Colonic mucosa (tissue), 4 donors: ENCODE measurements at regions of chr5 and their contacts with region 1.

Region 1: GRCh38 chr5:65925601-65926275 is 637 bp upstream of the ERBIN start:
- DNase-seq: peak; percentile 78
- H3K4me3 ChIP-seq: peak overlapping the region; percentile 74
- H3K27ac ChIP-seq: peak overlapping the region; percentile 100
- H3K4me1 ChIP-seq: peaks cover 3% of the 10 kb centered on the region
- H3K27me3 ChIP-seq: no peaks in the 10 kb centered on the region
- CTCF ChIP-seq: no peak

Region 2: DNA sequence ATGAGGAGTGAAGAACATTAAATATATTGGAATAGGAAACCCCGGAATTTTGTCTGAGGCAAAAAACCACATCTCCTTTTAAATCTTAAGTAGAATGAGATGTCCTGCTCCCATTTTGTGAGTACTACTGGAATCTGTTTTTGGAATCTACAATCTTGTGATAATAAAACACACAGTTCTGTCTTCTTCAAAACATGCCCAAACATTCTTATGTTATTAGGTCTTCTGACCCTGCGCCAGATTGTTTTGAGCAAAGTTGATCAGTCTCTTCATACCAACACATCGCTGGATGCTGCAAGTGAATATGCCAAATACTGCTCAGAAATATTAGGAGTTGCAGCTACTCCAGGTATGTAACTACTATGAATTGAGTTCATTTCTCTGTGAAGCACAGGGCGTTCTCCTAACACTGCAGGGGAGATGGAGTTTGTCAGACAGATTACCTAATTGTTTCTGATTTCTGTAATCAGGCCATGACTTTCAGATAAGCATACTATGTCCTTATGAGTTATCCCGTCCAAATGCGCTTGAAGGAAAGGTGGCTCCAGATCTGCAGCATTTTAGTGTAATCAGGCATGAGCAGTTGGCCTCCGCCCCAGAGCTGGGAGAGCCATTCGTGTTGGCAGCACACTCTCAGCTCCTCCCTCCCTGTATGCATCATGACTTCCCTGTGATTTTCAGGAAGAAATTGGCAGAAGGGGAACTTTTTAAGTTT is 115.8 kb before region 1 on chr5:
- intact Hi-C with region 1: loop called (anchors 10 kb)
- DNase-seq: peak; percentile 85
- H3K4me3 ChIP-seq: no peak overlapping the region
- H3K27ac ChIP-seq: peak overlapping the region; percentile 82
- H3K4me1 ChIP-seq: no peaks in the 10 kb centered on the region
- H3K27me3 ChIP-seq: no peaks in the 10 kb centered on the region
- CTCF ChIP-seq: no peak

Region 3: DNA sequence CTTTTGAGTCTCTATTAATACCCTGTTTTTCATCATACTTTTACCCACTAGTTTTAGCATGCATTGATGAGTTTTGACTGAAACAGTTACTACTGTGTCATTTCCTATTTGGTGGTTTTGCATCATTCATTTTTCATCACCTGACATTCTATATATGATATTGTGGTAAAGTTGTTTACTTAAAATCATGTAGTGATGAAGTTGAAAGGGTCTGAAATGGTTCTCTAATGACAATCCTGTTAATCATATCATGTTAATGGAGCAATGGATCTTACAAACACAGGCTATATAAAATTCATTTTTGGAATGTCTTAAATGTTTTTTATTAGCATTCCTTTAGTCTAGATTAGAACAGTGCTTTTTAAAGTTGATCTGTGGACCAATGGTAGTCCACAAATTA is 84.7 kb after region 1 on chr5:
- intact Hi-C with region 1: loop called (anchors 10 kb)
- DNase-seq: no peak
- H3K4me3 ChIP-seq: no peak overlapping the region
- H3K27ac ChIP-seq: no peak overlapping the region
- H3K4me1 ChIP-seq: peaks cover 4% of the 10 kb centered on the region
- H3K27me3 ChIP-seq: no peaks in the 10 kb centered on the region
- CTCF ChIP-seq: no peak